Sigmoid colon (tissue), 7 donors: ENCODE measurements at regions of chr21 and their contacts with region 1.

Region 1: DNA sequence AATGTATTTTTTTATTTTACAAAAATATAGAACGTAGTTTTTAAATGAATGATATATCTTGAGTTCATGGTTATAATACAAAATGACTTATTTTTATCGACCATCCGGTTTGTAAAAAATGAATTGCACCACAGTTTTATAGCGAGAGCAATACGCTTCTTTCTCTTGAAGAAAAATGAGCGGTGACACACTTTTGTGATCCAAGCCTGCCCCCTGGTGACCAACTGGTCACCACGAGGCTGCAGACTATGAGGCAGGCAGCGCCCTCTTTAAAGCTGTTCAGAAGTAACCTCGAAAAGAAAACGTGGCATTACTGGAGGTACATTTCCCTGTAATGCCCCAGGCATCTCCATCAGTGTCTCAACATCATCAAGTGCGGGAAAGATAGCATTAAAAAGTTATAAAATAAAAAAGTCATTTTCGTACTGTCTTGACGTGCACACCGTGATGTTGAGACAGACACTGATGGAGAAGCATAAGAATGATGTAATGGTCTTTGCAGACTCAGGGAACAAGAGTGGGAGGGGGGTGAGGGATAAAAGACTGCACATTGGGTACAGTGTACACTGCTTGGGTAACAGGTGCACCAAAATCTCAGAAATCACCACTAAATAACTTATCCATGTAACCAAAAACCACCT is 734.2 kb upstream of the ADAMTS5 start:
- DNase-seq: peak; percentile 91
- H3K4me3 ChIP-seq: no peak overlapping the region
- H3K27ac ChIP-seq: no peak overlapping the region
- H3K4me1 ChIP-seq: peaks cover 0 to 38% (median 16%) of the 10 kb centered on the region in 4 donors
- H3K27me3 ChIP-seq: no peaks in the 10 kb centered on the region
- CTCF ChIP-seq: peak; percentile 66 to 85 (median 76)
- EP300 ChIP-seq: no peak
- POLR2A ChIP-seq: no peak

Region 2: GRCh38 chr21:26842976-26843932 is 857.8 kb before region 1 on chr21:
- intact Hi-C with region 1: loop called (anchors 1 kb)
- DNase-seq: peak; percentile 97
- H3K4me3 ChIP-seq: peak overlapping the region; percentile 62 to 81 (median 73)
- H3K27ac ChIP-seq: peak overlapping the region; percentile 91 to 98 (median 92)
- H3K4me1 ChIP-seq: peaks cover 0 to 53% (median 34%) of the 10 kb centered on the region in 4 donors
- H3K27me3 ChIP-seq: no peaks in the 10 kb centered on the region
- CTCF ChIP-seq: peak; percentile 16 to 35 (median 28)
- EP300 ChIP-seq: peak in 1 of 4 donors; percentile 69
- POLR2A ChIP-seq: no peak

Region 3: DNA sequence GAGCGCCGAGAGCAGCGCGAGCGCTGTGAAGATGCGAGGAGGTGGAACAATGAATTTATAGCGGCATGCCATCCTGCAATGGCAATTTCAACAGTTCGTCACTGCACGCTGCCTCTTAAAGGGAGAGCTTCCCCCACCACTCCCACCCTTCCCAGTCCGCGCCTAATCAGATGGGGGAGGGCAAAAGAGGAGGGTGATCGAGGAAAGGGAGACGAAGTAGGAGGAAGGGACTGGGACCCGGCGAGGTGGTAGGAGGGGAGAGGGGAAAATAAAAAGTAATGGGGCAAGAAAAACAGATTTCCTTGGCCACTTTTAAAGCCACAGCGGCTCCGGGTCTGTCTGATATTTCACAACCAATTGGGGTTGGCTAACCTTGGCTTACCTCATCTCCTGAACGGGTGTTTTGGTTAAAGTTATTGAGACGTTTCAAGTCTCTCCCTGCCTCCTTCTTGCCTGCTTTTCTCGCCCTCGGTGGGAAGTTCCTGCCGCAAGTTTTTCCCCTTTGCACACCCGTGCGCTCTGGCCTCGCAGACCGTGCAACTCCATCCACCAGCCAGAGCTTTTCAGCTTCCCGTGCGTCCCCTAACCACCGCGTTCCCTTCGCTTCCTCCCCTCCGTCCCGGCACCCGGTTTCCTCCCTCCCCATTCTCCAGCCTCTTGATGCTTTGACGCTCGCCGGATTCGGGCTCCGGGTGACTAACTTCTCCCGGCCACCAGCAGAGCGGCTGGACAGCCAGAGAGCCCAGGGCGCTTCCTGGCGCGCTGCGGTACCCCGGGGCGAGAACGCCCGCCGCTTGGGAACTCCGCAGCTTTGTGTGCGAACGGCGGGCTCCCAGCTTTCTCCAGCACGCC is 733.8 kb before region 1 on chr21 and contains the start of gene ADAMTS5:
- intact Hi-C with region 1: loop called (anchors 5 kb)
- DNase-seq: peak; percentile 77
- H3K4me3 ChIP-seq: peak within 1 kb of the TSS; percentile 43 to 61 (median 58)
- H3K27ac ChIP-seq: peak within 1 kb of the TSS; percentile 70 to 83 (median 75)
- H3K4me1 ChIP-seq: peaks cover 0 to 32% (median 23%) of the 10 kb centered on the region in 4 donors
- H3K27me3 ChIP-seq: peaks cover 7 to 22% (median 14%) of the 10 kb centered on the region in 3 donors
- CTCF ChIP-seq: no peak
- EP300 ChIP-seq: no peak
- POLR2A ChIP-seq: no peak
- total RNA-seq, gene ADAMTS5: 5.6 to 20.3 (median 16.7) TPM

Region 4: GRCh38 chr21:28745131-28746016 is 1044.3 kb after region 1 on chr21:
- intact Hi-C with region 1: loop called (anchors 5 kb)
- DNase-seq: peak; percentile 87
- H3K4me3 ChIP-seq: peak overlapping the region; percentile 33 to 55 (median 46)
- H3K27ac ChIP-seq: peak overlapping the region; percentile 68 to 84 (median 74)
- H3K4me1 ChIP-seq: peaks cover 0 to 34% (median 14%) of the 10 kb centered on the region in 4 donors
- H3K27me3 ChIP-seq: no peaks in the 10 kb centered on the region
- CTCF ChIP-seq: peak; percentile 89 to 99 (median 96)
- EP300 ChIP-seq: no peak
- POLR2A ChIP-seq: no peak